ENCODE measurements at regions of chr3 and their contacts with region 1.

Region 1: DNA sequence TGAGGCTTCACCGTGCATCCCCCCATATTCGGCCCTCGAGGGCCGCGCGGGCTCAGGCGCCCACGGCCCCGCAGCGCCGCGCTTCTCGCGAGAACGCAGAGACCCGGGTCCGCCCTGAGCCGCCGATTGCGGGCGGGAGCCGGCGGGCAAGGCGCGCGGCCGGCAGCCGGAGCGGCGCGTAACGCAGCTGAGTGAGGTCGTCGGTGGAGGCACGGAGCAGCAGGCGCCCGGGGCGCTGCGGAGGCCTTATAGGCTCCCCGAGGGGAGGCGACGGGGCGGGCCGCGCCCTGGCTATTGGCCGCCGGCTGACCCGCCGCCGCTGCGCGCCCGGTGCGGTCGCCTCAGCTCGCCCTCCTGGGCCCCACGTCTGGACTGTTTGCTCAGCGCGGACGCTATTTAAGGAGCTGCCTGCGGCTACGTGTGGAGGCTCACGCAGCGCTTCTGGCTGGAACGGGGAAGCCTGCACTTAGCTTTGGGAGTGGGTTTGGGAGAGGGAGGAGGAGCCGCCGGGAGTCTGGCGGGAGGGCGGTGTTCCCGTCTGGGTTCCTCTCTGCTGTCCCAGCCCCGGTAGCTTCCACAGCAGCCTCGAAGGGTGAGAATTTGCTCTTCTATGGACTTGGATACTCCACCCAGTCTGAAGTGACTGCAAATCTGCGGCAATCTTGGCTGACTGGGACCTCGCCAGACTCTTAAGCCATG is at the start of gene PLOD2:
- DNase-seq: peak; percentile 88
- ATAC-seq: peak; percentile 84
- total RNA-seq, gene PLOD2: 19.2 TPM

Region 2: DNA sequence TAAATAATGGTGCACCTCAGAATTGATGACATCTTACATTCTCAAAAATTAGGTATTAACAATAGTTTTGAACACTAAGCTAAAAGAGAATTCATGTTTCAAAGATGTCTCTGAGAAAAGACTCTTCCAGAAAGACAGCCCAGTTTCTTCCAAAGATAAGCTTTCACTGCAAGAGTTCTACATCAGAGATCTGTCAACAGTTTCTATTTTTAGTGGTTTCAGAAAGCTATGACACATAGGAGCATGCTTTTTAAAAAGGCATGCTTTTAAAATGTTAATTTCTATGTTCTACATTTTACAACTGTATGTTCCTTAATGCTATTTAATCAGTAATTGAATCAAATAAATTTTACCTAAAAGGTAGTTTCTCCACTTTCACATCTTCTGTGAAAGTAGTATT is 88.3 kb before region 1 on chr3:
- intact Hi-C with region 1: loop called (anchors 10 kb)
- DNase-seq: no peak
- ATAC-seq: peak; percentile 57

Region 3: GRCh38 chr3:146313411-146314111 is 152.4 kb after region 1 on chr3:
- intact Hi-C with region 1: no loop called
- DNase-seq: no peak
- ATAC-seq: peak; percentile 22

Measured in left ventricle myocardium superior (tissue), 1 donor.